ENCODE measurements at regions of chr22 and their contacts with region 1.

Region 1: GRCh38 chr22:39097098-39098020 is at the start of gene APOBEC3H:
- DNase-seq: no peak
- ATAC-seq: no peak
- H3K4me3 Mint-ChIP-seq: peak within 1 kb of the TSS; percentile 48
- H3K27ac Mint-ChIP-seq: peak within 1 kb of the TSS; percentile 94
- H3K4me1 Mint-ChIP-seq: peaks cover 73% of the 10 kb centered on the region
- H3K27me3 Mint-ChIP-seq: no peaks in the 10 kb centered on the region
- CTCF ChIP-seq: no peak
- total RNA-seq, gene APOBEC3H: 1.4 TPM in 2 replicates

Region 2: GRCh38 chr22:38967451-38968450 is 129.6 kb before region 1 on chr22:
- CTCF ChIA-PET with region 1: no interaction called
- POLR2A ChIA-PET with region 1: no interaction called
- intact Hi-C with region 1: no loop called
- DNase-seq: no peak
- ATAC-seq: peak; percentile 45
- H3K4me3 Mint-ChIP-seq: peak overlapping the region; percentile 38
- H3K27ac Mint-ChIP-seq: no peak overlapping the region
- H3K4me1 Mint-ChIP-seq: peaks cover 20% of the 10 kb centered on the region
- H3K27me3 Mint-ChIP-seq: peaks cover 6% of the 10 kb centered on the region
- CTCF ChIP-seq: no peak

Region 3: DNA sequence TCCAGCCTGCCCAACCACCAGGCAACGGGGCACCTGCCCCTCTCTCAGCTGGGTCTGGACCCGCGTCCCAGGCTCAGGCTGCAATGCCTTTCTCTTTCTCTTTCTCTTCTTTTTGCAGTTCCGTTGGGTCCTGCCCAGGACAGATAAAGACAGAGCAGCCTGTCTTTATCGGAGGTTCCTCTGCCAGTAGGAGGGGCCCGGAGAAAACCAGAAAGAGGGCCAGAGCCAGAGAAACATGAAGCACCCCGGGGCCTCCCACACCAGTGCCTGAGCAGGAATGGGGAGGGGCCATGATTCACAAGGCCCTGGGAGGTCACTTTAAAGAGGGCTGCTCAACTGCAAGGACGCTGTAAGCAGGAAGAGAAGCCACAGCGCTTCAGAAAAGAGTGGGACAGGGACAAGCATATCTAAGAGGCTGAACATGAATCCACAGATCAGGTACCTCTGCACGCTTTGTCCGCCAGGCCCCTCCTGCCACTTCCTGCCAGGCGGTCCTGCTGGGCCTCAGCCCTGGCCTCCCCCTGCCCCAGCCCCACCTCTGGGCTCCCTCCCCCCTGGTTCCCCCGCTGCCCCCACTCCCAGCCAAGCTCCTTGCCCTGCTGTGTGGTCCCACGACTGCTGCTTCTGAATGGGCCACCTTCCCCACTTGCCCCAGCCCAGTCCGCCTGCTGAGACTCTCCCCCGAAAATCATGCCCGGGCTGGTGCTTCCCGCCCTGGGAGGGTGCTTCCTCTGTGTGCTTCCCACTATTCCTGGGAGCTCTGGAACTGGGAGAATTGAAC is 83.2 kb before region 1 on chr22 and contains the start of gene APOBEC3C:
- CTCF ChIA-PET with region 1: no interaction called
- POLR2A ChIA-PET with region 1: interaction called, 24 read pairs
- intact Hi-C with region 1: loop called (anchors 1 kb)
- DNase-seq: peak; percentile 65
- ATAC-seq: peak; percentile 96
- H3K4me3 Mint-ChIP-seq: peak within 1 kb of the TSS; percentile 96
- H3K27ac Mint-ChIP-seq: peak within 1 kb of the TSS; percentile 95
- H3K4me1 Mint-ChIP-seq: peaks cover 57% of the 10 kb centered on the region
- H3K27me3 Mint-ChIP-seq: no peaks in the 10 kb centered on the region
- CTCF ChIP-seq: no peak
- total RNA-seq, gene APOBEC3C: 173 and 179 TPM in 2 replicates

Region 4: GRCh38 chr22:39021552-39022250 is 75.7 kb before region 1 on chr22:
- CTCF ChIA-PET with region 1: no interaction called
- POLR2A ChIA-PET with region 1: interaction called, 18 read pairs
- intact Hi-C with region 1: no loop called
- DNase-seq: no peak
- ATAC-seq: no peak
- H3K4me3 Mint-ChIP-seq: peak overlapping the region; percentile 91
- H3K27ac Mint-ChIP-seq: peak overlapping the region; percentile 96
- H3K4me1 Mint-ChIP-seq: peaks cover 54% of the 10 kb centered on the region
- H3K27me3 Mint-ChIP-seq: no peaks in the 10 kb centered on the region
- CTCF ChIP-seq: no peak

Region 5: DNA sequence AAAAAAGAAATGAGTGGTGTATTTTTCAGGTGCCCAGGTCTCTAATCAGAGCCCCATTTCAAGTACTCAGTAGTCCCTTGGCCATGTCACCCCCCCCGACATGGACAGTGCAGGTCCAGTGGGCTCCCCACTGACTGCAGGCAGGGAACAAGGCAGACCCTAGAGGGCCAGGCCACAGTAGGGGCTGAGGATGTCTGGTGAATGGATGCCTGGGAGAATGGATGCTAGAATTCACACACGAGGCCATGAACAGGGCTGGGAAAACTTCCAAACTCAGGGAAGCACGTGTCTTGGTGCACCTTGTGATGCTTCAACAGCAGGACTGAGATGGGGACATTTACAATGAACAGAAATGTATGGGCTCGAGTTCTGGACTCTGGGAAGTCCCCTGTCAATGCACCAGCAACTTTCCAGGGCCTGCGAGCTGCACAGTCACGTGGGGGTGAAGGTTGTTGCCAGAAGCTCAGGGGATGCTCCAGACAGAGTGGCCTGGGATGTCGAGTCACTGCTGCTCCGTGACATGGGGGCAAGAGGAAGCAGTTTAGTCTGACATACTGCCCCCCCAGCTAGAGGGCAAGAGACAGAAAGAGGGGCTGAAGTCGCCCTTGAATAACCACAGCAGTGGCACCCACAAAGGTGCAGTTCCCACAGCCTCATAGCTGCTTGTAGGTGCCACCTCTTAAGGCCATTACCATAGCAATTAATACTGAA is 17.2 kb before region 1 on chr22:
- CTCF ChIA-PET with region 1: interaction called, 6 read pairs
- POLR2A ChIA-PET with region 1: interaction called, 212 read pairs
- intact Hi-C with region 1: loop called (anchors 1 kb)
- DNase-seq: peak; percentile 43
- ATAC-seq: peak; percentile 29
- H3K4me3 Mint-ChIP-seq: peak overlapping the region; percentile 77
- H3K27ac Mint-ChIP-seq: peak overlapping the region; percentile 79
- H3K4me1 Mint-ChIP-seq: peaks cover 63% of the 10 kb centered on the region
- H3K27me3 Mint-ChIP-seq: no peaks in the 10 kb centered on the region
- CTCF ChIP-seq: no peak

Region 6: DNA sequence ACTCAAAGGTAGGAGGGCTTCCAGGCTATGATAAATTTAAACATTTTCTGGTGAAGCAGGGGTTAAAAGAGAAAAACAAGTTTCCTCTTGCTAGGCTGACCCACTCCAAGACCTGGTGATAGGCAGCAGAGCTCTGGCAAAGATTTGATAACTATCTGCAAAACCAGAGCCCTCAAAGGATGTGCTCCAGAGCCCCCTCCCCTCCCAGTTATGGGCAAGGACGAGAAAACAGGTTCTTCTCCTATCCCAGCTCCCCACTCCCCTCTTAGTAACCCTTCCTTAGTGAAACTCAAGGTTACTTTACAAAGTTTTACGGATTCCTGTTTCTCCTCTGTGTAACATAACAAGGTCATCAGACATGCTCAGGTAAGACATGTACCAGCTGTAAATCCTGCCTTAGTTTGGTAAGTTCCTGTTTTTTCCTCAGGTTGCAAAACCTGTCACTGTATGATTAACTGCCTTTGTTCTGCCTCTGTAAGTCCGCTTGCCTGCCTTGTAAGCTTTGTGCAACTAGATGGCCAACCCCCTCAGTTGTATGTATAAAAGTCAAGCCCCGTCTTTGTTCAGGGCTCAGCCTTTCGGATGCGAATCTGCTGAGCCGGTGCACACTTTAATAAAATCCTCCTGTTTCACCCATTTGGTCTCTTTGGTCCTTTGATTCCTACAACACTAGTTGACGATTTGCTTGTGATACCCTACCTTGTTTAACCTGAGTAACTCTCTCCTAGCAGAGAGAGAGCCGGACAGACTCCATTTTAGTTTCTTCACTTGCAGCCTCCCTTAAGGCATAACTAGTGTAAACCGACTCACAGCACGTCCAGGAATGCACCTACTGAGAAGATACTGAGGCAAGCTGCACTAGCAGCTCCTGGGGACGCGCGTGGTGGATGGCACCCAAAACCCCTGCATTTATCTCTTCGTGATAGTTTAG is 13.5 kb after region 1 on chr22:
- CTCF ChIA-PET with region 1: interaction called, 5 read pairs
- POLR2A ChIA-PET with region 1: interaction called, 37 read pairs
- intact Hi-C with region 1: loop called (anchors 1 kb)
- DNase-seq: no peak
- ATAC-seq: peak; percentile 55
- H3K4me3 Mint-ChIP-seq: no peak overlapping the region
- H3K27ac Mint-ChIP-seq: peak overlapping the region; percentile 37
- H3K4me1 Mint-ChIP-seq: peaks cover 48% of the 10 kb centered on the region
- H3K27me3 Mint-ChIP-seq: no peaks in the 10 kb centered on the region
- CTCF ChIP-seq: no peak

Region 7: DNA sequence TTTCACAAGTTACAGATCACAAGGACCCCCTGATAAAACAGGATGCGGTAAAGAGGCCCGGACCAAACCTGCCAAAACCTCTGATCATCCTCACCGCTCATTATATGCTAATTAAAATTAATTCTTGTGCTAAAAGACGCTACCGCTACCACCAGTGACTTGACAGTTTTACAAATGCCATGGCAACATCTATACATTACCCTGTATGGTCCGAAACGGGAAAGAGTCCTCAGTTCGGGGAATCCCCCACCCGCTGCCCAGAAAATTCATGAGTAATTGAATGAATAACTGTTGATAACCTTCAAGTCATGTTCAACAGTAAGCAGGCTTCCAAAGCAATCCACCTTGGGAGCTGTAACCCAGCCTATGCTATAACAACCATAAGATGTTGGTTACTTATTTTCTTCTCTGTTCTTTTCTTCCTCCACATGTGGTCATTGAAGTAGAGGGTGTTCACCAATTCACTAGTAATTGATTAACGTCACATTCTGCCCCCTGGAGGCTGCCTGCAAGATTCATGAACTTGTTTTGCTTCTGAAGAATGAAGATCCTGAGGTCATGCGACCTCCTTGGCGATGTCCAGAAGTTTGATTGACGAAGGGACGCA is 20.3 kb after region 1 on chr22:
- CTCF ChIA-PET with region 1: interaction called, 14 read pairs
- POLR2A ChIA-PET with region 1: interaction called, 37 read pairs
- intact Hi-C with region 1: loop called (anchors 1 kb)
- DNase-seq: peak; percentile 37
- ATAC-seq: peak; percentile 64
- H3K4me3 Mint-ChIP-seq: peak overlapping the region; percentile 67
- H3K27ac Mint-ChIP-seq: peak overlapping the region; percentile 86
- H3K4me1 Mint-ChIP-seq: peaks cover 52% of the 10 kb centered on the region
- H3K27me3 Mint-ChIP-seq: no peaks in the 10 kb centered on the region
- CTCF ChIP-seq: no peak

Measured in activated B cell treated with CpG ODN at 0.5 μM for 24 hours (primary cell).